ENCODE measurements at regions of chr5 and their contacts with region 1.

Region 1: DNA sequence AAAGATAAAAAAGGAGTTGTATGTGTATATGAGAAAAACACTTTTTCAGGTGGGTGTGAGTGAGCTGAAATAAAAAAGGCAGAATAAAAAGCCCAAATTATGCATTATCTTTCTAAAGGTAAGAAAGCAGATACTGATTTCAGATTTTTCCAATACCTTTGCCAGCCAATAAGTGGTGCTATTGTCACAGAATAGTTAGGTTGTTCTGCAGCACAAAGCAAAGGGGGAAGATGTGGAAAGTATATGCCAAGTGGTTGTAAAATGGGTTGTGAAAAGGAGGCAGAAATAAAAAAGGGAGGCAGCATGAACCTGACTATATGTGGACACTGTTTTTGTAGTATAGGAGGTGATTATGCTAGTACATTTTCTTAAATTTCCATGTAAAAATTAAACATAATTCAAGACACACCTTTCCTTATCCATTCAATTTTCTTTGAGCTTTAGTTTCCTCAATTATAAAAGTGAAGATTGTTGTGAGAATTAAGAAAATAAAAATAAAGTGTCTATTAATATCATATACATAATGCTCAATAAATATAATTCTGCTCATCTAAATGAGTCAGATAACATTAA is 106.7 kb downstream of the SMIM15 start:
- DNase-seq: no peak
- ATAC-seq: peak; percentile 87

Region 2: GRCh38 chr5:61641747-61642578 is 586.4 kb after region 1 on chr5:
- intact Hi-C with region 1: loop called in 1 of 2 experiments (anchors 10 kb)
- DNase-seq: no peak
- ATAC-seq: peak; percentile 73

Measured in left colon (tissue), 2 donors.